ENCODE measurements at regions of chr2 and their contacts with region 1.

Region 1: GRCh38 chr2:114550895-114551793 is 108.7 kb downstream of the DPP10 start:
- DNase-seq: peak; percentile 32
- ATAC-seq: peak; percentile 94
- H3K4me3 ChIP-seq: no peak overlapping the region
- H3K27ac ChIP-seq: no peak overlapping the region
- H3K4me1 ChIP-seq: no peaks in the 10 kb centered on the region
- H3K27me3 ChIP-seq: no peaks in the 10 kb centered on the region
- CTCF ChIP-seq: peak; percentile 84

Region 2: GRCh38 chr2:113977660-113978523 is 573.3 kb before region 1 on chr2:
- CTCF ChIA-PET with region 1: interaction called, 12 read pairs
- POLR2A ChIA-PET with region 1: no interaction called
- in situ Hi-C with region 1: no loop called
- intact Hi-C with region 1: loop called (anchors 2 kb)
- DNase-seq: no peak
- ATAC-seq: peak; percentile 82
- H3K4me3 ChIP-seq: no peak overlapping the region
- H3K27ac ChIP-seq: peak overlapping the region; percentile 77
- H3K4me1 ChIP-seq: peaks cover 17% of the 10 kb centered on the region
- H3K27me3 ChIP-seq: no peaks in the 10 kb centered on the region
- CTCF ChIP-seq: peak; percentile 71

Region 3: GRCh38 chr2:114598329-114598728 is 47.2 kb after region 1 on chr2:
- CTCF ChIA-PET with region 1: no interaction called
- POLR2A ChIA-PET with region 1: no interaction called
- in situ Hi-C with region 1: no loop called
- intact Hi-C with region 1: no loop called
- DNase-seq: no peak
- ATAC-seq: no peak
- H3K4me3 ChIP-seq: no peak overlapping the region
- H3K27ac ChIP-seq: no peak overlapping the region
- H3K4me1 ChIP-seq: no peaks in the 10 kb centered on the region
- H3K27me3 ChIP-seq: no peaks in the 10 kb centered on the region
- CTCF ChIP-seq: no peak